IMR-90 (cell line): ENCODE measurements at regions of chr2 and their contacts with region 1.

Region 1: DNA sequence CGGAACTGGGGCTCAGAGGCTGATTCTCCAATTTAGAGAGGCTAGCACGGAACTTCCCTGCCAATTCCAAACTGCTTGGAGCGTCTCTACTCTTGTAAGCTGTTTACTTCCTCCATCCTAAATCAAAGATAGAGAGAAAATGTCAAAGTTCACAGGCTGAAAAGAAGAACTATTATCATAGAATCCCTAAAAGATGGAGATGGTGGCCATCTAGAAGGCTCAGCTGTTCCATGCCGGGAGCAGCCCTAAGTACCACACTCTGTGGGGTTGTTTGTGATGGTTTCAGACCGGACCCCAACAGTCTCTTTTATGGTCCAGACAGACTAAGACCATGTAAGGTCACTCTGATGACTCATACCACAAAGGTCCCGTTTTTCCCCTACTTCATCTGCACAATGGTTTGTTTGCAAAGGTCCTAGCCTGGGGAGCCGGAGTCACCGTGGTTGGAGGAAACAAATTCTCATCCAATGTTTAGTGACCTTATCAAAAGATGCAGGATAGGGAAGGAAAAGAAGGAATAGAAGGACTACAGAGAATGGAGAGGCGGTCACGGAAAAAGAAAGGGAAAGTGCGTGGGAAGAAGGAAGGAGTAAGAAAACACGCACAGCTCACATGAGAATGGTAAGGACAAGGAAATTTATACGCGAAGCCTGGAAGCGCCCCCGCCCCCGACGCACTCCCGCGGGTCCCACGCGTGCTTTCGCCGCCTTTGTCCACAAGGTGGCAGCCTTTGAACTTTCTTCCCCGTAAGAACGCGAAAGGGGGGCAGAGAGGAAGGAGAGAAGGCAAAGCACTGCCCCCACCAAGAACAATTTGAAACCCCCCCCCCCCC is 453 bp upstream of the ANTXR1 start:
- DNase-seq: peak; percentile 76
- ATAC-seq: peak; percentile 68
- H3K4me3 ChIP-seq: peak overlapping the region; percentile 99
- H3K27ac ChIP-seq: peak overlapping the region; percentile 89
- H3K4me1 ChIP-seq: peaks cover 3% of the 10 kb centered on the region; the same call in 1 of the 2 replicates
- H3K27me3 ChIP-seq: no peaks in the 10 kb centered on the region
- CTCF ChIP-seq: peak; percentile 78
- POLR2A ChIP-seq: no peak
- RAD21 ChIP-seq: peak; percentile 74

Region 2: GRCh38 chr2:68467077-68467960 is 545.2 kb before region 1 on chr2 and contains the starts of genes APLF and FBXO48:
- CTCF ChIA-PET with region 1: no interaction called
- POLR2A ChIA-PET with region 1: no interaction called
- dilution Hi-C with region 1: no loop called
- in situ Hi-C with region 1: no loop called
- intact Hi-C with region 1: loop called (anchors 10 kb)
- DNase-seq: peak; percentile 99
- ATAC-seq: peak; percentile 96
- H3K4me3 ChIP-seq: peak within 1 kb of the TSS; percentile 75
- H3K27ac ChIP-seq: peak within 1 kb of the TSS; percentile 63
- H3K4me1 ChIP-seq: peaks cover 3% of the 10 kb centered on the region; the same call in 1 of the 2 replicates
- H3K27me3 ChIP-seq: no peaks in the 10 kb centered on the region
- CTCF ChIP-seq: no peak
- POLR2A ChIP-seq: peak; percentile 91
- RAD21 ChIP-seq: no peak
- total RNA-seq, gene APLF: 2.3 and 3.3 TPM in 2 replicates
- total RNA-seq, gene FBXO48: 0.18 and 0.28 TPM in 2 replicates

Region 3: DNA sequence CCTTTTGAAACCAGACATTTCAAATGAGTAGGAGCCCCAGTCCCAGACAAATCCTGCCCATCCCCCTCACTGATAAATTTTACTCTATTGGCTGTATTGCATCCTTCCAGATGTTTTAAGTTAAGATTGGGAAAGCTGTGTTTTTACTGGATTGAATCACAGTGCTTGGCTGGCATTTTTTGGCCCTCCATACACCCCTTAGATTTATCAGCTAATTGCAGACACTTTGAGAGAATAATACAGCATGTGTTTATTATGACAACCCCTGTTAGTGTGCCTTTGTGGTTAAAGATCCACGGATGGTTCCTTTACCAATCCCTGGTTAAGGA is 75.3 kb after region 1 on chr2:
- CTCF ChIA-PET with region 1: no interaction called
- POLR2A ChIA-PET with region 1: no interaction called
- dilution Hi-C with region 1: no loop called
- in situ Hi-C with region 1: no loop called
- intact Hi-C with region 1: loop called (anchors 2 kb)
- DNase-seq: peak; percentile 24
- ATAC-seq: peak; percentile 28
- H3K4me3 ChIP-seq: no peak overlapping the region
- H3K27ac ChIP-seq: peak overlapping the region; percentile 48; the same call in 1 of the 2 replicates
- H3K4me1 ChIP-seq: peaks cover 25% of the 10 kb centered on the region
- H3K27me3 ChIP-seq: no peaks in the 10 kb centered on the region
- CTCF ChIP-seq: no peak
- POLR2A ChIP-seq: no peak
- RAD21 ChIP-seq: no peak

Region 4: DNA sequence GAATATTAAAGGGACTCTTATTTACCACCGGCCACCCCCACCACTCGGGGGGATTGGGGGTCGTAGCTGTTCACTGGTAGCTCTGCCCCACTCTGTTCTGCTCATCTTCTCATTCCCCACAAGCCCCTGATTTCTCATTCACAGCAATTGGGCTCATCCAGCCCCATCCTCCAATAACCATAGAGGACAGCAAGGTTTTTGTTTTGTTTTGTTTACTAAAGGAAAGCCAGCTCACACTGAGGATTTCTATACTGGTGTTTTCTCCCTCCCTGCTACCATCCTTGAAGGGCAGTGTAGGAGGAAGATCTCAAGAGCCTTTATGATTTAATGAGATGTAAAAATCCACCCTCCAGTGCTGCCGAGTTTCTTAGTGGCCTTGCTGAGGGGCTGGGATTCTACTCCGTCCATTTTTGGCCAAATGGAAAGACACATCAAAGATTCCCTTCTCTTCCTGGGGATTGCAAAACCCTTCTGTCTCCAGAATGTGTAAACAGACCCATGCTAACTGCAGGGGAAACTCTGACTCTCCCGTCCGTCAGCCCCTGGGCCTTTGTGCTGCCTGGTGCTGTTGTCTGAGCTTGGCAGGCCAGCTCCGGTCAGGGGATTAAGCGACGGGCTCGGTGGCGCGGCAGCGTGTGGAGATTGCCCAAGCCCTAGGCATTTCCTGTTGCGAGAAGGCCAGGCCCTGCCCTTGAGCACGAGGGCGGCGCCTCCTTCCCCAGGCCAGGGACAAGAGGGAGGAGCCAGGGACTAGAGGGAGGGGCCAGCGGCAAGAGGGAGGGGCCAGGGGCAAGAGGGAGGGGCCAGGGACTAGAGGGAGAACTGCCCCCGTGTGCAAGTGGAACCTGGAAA is 165.5 kb after region 1 on chr2:
- CTCF ChIA-PET with region 1: no interaction called
- POLR2A ChIA-PET with region 1: interaction called, 4 read pairs
- dilution Hi-C with region 1: no loop called
- in situ Hi-C with region 1: loop called (anchors 10 kb)
- intact Hi-C with region 1: no loop called
- DNase-seq: peak; percentile 92
- ATAC-seq: peak; percentile 89
- H3K4me3 ChIP-seq: no peak overlapping the region; the same call in 1 of the 2 replicates
- H3K27ac ChIP-seq: peak overlapping the region; percentile 88
- H3K4me1 ChIP-seq: peaks cover 22% of the 10 kb centered on the region
- H3K27me3 ChIP-seq: no peaks in the 10 kb centered on the region
- CTCF ChIP-seq: no peak
- POLR2A ChIP-seq: peak; percentile 75; the same call in 1 of the 2 replicates
- RAD21 ChIP-seq: peak; percentile 23; the same call in 1 of the 2 replicates

Region 5: DNA sequence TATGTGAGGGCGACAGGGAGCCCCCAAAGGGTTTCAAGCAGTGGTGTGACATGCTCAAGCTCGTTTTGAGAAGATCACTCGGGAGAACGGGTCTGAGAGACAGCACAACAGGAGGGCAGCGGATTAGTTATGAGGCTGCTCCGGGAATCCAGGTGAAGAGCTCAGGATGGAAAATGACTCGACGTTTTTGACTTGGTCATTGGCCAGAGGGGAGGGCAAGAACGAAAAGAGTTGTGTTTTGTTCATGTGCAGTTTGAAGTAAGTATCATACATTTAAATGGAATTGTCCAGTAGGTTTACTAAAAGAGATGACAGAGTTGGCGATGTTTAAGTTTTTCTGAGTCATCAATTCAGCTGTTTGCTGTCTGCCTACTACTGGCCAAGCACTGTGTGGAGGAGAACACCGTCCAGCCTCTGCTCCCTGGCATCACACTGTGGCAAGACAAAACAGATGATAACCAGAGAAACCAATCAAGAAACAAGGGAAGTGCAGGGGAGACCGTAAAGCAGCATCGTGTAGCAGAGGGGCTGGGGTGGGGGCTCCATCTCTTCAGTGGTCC is 704.1 kb after region 1 on chr2:
- CTCF ChIA-PET with region 1: no interaction called
- POLR2A ChIA-PET with region 1: no interaction called
- dilution Hi-C with region 1: no loop called
- in situ Hi-C with region 1: no loop called
- intact Hi-C with region 1: loop called (anchors 2 kb)
- DNase-seq: peak; percentile 71
- ATAC-seq: peak; percentile 60
- H3K4me3 ChIP-seq: no peak overlapping the region
- H3K27ac ChIP-seq: no peak overlapping the region
- H3K4me1 ChIP-seq: 0 out of 2 replicates have a peak, but pooled peaks cover 3% of the 10 kb centered on the region
- H3K27me3 ChIP-seq: no peaks in the 10 kb centered on the region
- CTCF ChIP-seq: 0 out of 2 replicates have a peak, but pooled peaks have one; percentile 10
- POLR2A ChIP-seq: no peak
- RAD21 ChIP-seq: peak; percentile 14